ENCODE measurements at regions of chr15 and their contacts with region 1.

Region 1: DNA sequence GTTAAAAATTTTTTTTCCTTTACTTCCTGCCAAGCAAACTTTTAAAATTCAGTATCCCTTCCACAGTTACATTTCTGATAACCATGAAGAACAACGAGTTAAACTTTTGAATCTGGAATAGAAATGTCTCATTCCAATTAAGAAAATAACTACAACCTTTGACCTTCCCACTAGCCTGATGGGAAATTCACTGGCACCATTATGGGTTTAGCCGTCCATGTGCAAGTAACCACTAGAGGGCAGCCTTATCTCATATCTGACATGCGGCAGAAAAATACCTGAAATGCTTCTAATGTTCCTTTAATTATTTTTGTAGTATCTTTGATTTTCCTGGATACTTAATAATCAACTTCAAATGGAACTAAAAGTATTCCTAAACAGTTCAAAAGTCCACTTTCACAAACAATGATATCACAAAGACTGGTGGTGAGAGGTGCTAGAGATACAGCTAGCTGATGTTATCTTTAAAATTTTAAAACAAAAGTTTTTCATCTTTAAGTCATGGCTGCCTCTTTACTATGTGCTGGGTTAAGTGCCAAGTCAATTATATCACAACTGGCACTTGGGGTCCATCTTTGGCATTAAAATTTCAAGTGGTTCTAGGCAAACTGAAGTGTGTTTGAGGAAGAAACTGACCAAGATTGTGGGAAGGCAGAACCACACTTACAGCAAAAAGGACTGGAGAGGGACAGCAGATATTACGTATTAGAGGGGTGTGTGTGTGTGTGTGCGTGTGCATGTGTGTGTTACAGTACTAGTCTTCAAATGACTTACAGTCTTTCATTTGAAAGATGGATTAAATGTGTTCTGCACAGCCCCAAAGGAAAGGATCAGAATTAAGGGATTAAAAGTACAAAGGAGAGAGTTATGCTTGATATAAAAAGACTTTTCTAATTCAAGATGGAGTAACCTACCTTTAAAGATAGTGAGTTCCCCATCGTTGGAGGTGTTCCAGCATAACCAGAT is 107.1 kb upstream of the ICE2 start:
- DNase-seq: peak in 1 of 3 donors; percentile 75
- ATAC-seq: peak; percentile 77 to 86 (median 84)
- H3K4me3 ChIP-seq: no peak overlapping the region
- H3K27ac ChIP-seq: peak overlapping the region; percentile 7 to 48 (median 36)
- H3K4me1 ChIP-seq: peaks cover 0 to 58% (median 21%) of the 10 kb centered on the region in 4 donors
- H3K27me3 ChIP-seq: no peaks in the 10 kb centered on the region
- CTCF ChIP-seq: peak; percentile 87 to 97 (median 93)
- POLR2A ChIP-seq: no peak

Region 2: DNA sequence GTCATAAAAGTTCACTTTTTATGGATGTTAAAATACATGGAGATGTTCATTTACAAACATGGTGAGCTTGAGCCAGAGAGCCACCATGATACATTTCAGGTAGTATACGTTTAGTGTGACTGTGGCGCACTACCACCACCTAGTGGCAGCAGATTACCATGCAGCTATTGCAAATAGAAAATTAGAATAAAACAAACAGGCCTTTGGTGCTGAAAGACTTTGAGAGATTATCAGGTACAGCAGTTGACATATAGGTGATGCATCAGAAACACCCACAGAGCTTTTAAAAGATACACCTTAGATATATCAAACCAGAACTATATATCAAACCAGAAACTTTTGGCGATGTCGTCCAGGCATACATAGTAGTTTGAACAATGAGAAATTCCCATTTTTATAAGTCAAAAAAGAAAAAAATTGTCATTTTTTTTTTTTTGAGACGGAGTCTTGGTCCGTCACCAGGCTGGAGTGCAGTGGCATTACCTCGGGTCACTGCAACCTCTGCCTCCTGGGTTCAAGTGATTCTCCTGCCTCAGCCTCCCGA is 65.1 kb before region 1 on chr15:
- intact Hi-C with region 1: loop called in 1 of 2 experiments (anchors 10 kb)
- DNase-seq: peak in 2 of 3 donors; percentile 63 to 64
- ATAC-seq: peak; percentile 75 to 84 (median 78)
- H3K4me3 ChIP-seq: no peak overlapping the region
- H3K27ac ChIP-seq: no peak overlapping the region
- H3K4me1 ChIP-seq: peaks cover 0 to 6% (median under 1%) of the 10 kb centered on the region in 4 donors
- H3K27me3 ChIP-seq: no peaks in the 10 kb centered on the region
- CTCF ChIP-seq: peak; percentile 83 to 88 (median 87)
- POLR2A ChIP-seq: no peak

Region 3: DNA sequence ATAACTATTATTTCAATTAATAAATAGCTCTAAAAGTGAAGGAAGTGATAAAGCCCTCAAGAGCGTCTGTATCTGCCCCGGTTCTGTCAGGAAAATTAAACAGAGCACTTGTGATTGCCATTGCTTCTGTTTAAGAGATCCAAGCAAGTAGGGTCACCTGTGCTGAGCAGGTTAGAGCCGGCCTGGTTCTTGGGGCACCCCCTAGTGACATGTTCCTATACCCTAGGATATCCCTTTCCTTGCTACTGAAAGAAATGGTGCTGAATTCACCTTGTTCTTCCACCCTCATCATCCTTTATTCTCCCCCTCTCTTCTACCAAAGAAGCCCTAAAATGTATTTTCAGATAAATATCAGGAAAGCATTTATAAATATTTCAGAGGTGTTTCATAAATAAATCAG is 319.6 kb after region 1 on chr15:
- intact Hi-C with region 1: loop called in 1 of 2 experiments (anchors 10 kb)
- DNase-seq: no peak
- ATAC-seq: peak in 3 of 4 donors; percentile 25 to 48 (median 43)
- H3K4me3 ChIP-seq: no peak overlapping the region
- H3K27ac ChIP-seq: no peak overlapping the region
- H3K4me1 ChIP-seq: peaks cover 0 to 3% (median 0%) of the 10 kb centered on the region in 4 donors
- H3K27me3 ChIP-seq: no peaks in the 10 kb centered on the region
- CTCF ChIP-seq: peak in 2 of 4 donors; percentile 17
- POLR2A ChIP-seq: no peak

Measured in right lobe of liver (tissue), 6 donors.